ENCODE measurements at regions of chr16 and their contacts with region 1.

Region 1: GRCh38 chr16:4271176-4272066 is 1.4 kb downstream of the TFAP4 start:
- DNase-seq: peak; percentile 81 to 93 (median 85)
- ATAC-seq: peak; percentile 81
- H3K4me3 Mint-ChIP-seq: peak overlapping the region; percentile 83 to 92 (median 87)
- H3K27ac Mint-ChIP-seq: peak overlapping the region; percentile 63 to 95 (median 78)
- H3K4me1 Mint-ChIP-seq: peaks cover 7 to 41% (median 13%) of the 10 kb centered on the region in 4 donors
- H3K27me3 Mint-ChIP-seq: peaks cover 0 to 3% (median 0%) of the 10 kb centered on the region in 5 donors

Region 2: DNA sequence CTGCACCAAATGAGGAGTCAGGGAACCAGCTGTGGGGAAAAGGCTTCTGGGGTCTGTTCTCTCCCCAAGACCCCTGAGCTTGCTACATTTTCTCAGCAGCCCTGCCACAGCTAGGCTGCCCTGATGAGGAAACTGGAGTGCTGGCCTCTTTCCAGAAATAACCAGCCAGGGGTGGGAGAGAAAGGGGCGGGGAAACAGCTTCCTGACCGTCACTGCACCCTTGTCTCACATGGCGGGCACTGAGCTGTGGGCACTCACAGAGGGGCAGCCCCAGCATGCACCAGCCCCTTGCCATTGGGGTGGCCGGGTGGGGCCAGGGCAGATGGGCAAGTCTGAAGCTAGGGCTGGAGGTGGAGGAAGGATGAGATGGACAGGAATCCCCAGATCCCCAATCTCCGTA is 32.4 kb before region 1 on chr16:
- POLR2A ChIA-PET with region 1: no interaction called
- DNase-seq: no peak
- ATAC-seq: no peak
- H3K4me3 Mint-ChIP-seq: no peak overlapping the region
- H3K27ac Mint-ChIP-seq: peak overlapping the region in 1 of 10 donors; percentile 50
- H3K4me1 Mint-ChIP-seq: peaks cover 0 to 6% (median 0%) of the 10 kb centered on the region in 4 donors
- H3K27me3 Mint-ChIP-seq: peaks cover 7 to 25% (median 17%) of the 10 kb centered on the region in 5 donors

Region 3: DNA sequence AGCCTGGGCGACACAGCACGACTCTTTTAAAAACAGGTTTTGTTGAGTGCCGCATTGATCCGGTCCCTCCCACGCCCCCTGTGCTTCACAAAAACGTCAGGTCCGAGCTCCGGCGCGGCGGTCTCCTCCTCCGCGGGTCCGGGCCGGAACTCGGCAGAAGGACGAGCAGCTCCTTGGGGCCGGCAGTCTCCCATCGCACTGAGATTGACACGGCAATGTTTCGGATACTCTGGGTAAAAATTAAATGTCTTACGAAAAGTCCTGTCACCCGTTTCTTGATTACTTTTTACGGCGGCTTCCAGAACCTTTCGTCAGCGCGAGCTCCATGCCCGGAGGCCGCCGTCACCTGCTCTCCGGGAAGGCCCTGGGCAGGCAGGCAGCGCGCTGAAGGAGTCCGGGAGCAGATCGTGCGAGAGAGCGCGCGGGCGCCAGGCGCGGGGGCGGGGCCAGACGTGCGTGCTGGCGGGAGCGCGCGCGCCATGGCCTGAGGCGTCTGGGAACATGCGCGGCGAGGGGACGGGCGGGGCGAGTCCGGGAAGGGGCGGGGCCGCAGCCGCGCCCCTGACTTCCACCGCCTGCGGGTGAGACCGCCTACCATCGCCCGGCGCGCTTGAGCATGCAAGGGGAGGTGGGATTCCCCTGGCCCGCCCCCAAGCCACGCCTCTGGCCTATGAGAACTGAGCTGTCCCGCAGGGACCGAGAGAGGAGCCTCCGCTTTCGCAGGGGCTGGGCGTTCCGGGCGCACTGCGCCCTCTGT is 17.8 kb before region 1 on chr16:
- POLR2A ChIA-PET with region 1: interaction called, 98 read pairs
- DNase-seq: peak; percentile 94 to 100 (median 100)
- ATAC-seq: peak; percentile 96
- H3K4me3 Mint-ChIP-seq: peak overlapping the region; percentile 91 to 97 (median 95)
- H3K27ac Mint-ChIP-seq: peak overlapping the region; percentile 88 to 99 (median 97)
- H3K4me1 Mint-ChIP-seq: peaks cover 3 to 18% (median 7%) of the 10 kb centered on the region in 4 donors
- H3K27me3 Mint-ChIP-seq: no peaks in the 10 kb centered on the region

Region 4: GRCh38 chr16:4307215-4308037 is 36.0 kb after region 1 on chr16:
- POLR2A ChIA-PET with region 1: interaction called, 27 read pairs
- DNase-seq: peak; percentile 90 to 98 (median 98)
- ATAC-seq: peak; percentile 89 to 92
- H3K4me3 Mint-ChIP-seq: peak overlapping the region; percentile 88 to 95 (median 92)
- H3K27ac Mint-ChIP-seq: peak overlapping the region; percentile 93 to 99 (median 96)
- H3K4me1 Mint-ChIP-seq: peaks cover 11 to 35% (median 28%) of the 10 kb centered on the region in 4 donors
- H3K27me3 Mint-ChIP-seq: peaks cover 0 to under 1% (median 0%) of the 10 kb centered on the region in 5 donors

Region 5: DNA sequence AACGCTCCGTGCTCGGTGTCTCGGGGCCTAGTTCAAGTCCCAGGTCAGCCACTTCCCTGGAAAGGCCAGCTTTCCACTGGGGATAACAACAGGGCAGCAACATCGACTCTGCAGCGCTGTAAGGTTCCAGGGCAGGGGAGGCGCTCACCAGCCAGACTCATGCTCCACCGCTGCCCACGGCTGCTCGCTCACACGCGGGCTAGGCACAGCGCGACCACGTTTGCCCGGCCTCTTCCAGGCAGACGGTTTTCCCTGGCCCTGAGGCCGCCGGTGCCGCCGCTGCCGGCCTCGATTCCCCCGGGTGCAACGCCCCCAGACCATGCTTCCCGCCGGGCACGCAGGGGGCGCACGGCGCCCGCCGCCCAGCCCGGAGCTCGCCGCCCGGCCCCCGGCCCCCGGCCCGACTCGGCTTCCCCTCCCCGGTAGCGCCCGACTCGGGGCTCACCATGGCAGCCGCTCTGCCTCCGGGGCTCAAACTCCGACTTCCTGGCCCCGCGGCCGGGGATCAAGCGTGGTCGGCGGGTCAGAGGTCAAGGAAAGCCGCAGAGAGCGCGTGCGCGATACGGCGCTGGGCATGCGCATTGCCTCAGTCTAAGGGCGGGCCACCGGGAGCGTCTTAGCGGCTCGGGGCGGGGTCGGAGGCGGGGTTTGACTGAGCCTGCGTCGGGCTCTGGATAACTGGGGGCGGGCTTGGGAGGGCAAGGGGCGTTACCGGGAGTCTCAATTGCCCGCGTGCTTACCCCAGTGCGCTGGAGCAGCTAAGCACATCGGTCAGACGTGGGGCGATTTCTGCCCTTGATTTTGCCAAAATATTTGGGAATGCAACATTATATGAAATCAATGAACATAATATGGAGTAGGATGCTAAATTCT is 79.6 kb after region 1 on chr16 and contains the start of gene PAM16:
- POLR2A ChIA-PET with region 1: interaction called, 16 read pairs
- DNase-seq: peak; percentile 94 to 99 (median 98)
- ATAC-seq: peak; percentile 88 to 90
- H3K4me3 Mint-ChIP-seq: peak within 1 kb of the TSS; percentile 87 to 96 (median 94)
- H3K27ac Mint-ChIP-seq: peak within 1 kb of the TSS; percentile 81 to 96 (median 94)
- H3K4me1 Mint-ChIP-seq: peaks cover 10 to 46% (median 29%) of the 10 kb centered on the region in 4 donors
- H3K27me3 Mint-ChIP-seq: peaks cover 0 to 1% (median 0%) of the 10 kb centered on the region in 5 donors
- polyA plus RNA-seq, gene PAM16: 33.6 to 44.4 (median 39.3) TPM

Region 6: DNA sequence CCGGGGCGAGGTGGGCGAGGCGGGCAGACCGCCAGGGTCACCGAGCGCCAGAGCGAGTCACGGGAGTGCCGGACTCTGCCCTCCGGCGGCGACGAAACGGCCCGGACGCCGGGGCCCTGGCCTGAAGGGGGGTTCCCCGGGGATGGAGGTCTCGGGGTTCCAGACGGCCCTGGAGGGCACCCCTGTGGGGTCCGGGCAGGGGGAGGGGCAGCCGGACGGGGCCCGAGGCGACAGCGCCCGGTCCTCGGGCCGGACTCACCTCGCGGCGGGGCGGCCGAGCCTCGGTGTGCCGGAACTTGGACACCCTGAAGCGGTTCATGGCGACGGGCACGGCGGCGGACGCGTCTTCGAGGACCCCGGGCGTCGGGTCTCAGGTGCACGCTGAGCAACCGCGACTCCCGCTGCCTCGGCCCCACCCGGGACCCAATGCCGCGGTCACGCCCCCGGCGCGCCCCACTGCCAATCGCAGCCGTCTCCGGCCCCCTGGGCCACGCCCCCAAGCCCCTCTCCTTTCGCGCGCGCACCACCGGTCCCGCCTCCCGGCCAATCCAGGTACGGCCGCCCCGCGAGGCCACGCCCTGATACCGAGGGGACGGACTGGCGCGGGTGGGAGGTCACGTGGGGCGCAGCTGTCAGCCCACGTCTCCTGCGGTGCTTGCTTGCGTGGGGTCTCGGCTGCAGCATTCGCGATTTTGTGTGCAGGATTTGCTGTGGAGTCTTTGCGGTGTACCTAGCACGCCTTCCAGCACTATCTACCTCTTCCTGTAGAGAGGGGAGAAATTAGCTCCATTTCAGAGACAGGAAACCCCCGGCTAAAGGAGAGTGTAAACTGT is 145.0 kb after region 1 on chr16 and contains the start of gene CORO7:
- POLR2A ChIA-PET with region 1: interaction called, 17 read pairs
- DNase-seq: peak; percentile 98 to 100 (median 100)
- ATAC-seq: peak; percentile 68 to 69
- H3K4me3 Mint-ChIP-seq: peak within 1 kb of the TSS; percentile 92 to 99 (median 96)
- H3K27ac Mint-ChIP-seq: peak within 1 kb of the TSS; percentile 92 to 100 (median 99)
- H3K4me1 Mint-ChIP-seq: peaks cover 17 to 43% (median 34%) of the 10 kb centered on the region in 4 donors
- H3K27me3 Mint-ChIP-seq: no peaks in the 10 kb centered on the region
- polyA plus RNA-seq, gene CORO7: 44.6 to 79.9 (median 45.5) TPM